ENCODE measurements at regions of chr1 and their contacts with region 1.

Region 1: DNA sequence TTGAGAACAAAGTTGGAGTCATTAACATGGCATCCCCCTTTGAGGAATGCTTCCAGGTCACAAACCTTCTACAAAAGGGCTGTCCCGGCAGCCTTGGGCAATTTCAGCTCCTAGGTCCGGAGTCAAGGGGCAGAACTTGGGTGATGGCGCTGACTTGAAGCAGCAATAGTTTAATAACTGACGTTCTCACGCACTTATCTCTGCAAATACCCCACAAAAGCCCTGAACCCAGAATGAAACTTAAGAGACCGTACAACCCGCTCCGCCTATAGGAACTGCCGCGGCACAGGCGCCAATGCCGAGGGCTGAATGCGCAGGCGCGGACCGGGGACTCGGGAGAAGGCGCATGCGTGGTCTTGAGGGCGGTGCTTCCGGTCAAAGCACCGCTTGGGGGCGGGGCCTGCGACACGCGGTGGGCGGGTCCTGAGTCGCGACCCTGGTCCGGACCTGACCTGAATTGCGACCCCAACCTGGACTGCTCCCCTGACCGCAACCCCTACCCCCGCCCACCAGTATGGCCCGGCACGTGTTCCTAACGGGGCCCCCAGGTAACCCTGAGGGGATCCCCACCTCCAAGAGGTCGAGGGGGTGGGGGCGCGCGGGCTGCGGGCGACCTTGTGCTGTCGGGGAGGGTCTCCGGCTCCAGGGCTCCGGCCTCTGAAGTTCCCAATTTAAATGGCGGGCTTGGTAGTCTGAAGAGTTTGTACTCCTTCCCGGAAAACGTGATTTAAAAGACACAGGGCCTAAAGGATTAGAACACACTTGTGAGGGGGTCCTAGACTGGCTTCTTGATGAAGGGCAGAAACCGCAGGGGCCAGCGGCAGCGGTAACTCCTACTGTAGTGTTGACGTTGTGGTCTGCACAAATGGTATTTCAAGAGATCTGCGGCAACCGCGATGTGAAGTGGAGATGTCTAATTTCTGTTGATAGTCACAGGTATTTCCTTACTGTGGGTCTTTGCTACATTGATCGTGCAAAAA is at the start of gene NTPCR:
- DNase-seq: peak; percentile 84 to 99 (median 93)
- ATAC-seq: peak; percentile 88
- H3K4me3 ChIP-seq: peak within 1 kb of the TSS; percentile 76
- H3K4me3 Mint-ChIP-seq: peak within 1 kb of the TSS; percentile 90 to 98 (median 96)
- H3K27ac ChIP-seq: peak within 1 kb of the TSS; percentile 80
- H3K27ac Mint-ChIP-seq: peak within 1 kb of the TSS; percentile 90 to 97 (median 92)
- H3K4me1 ChIP-seq: peaks cover 8 to 18% of the 10 kb centered on the region in 2 donors
- H3K4me1 Mint-ChIP-seq: peaks cover 23 to 43% (median 42%) of the 10 kb centered on the region in 7 donors
- H3K27me3 ChIP-seq: no peaks in the 10 kb centered on the region
- H3K27me3 Mint-ChIP-seq: no peaks in the 10 kb centered on the region
- total RNA-seq, gene NTPCR: 16.0 to 28.7 (median 17.3) TPM

Region 2: DNA sequence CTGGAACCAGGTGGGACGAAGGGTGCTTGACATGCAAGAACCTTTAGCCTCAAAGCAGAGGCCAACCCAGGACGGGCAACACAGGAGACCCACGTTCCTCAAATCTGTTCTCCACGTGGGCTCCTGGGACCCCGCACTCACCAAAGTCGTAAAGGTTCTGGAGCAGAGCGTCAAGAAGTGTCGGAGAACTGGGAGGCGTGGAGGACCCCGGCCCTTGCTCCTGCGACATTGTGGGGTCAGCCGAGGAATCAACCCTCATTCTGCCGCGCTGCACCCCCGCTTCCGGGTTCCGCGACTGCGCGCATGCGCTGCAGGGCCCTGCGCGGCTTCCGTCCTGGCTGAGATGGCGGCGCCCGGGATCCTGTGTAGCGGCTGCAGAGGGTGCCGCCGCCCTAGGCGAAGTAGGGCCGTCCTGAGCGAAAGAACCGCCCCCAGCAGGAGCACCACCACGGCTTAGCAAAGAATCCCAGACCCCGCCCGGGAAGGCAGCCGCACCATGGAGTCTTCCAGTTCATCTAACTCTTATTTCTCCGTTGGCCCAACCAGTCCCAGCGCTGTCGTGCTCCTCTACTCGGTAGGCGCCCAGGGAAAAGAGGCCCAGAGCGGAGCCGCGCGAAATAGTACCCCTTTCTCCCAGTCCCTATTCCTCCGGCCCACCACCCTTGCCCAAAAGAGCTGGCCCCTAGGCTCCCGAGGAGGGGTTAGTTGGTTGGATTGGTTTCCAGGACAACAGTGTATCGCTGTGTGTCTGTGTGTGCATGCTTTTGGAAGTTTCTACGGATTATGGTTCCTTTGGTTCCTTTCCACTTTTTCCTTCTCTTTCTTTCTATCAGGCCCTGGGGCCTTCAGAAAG is 1709.4 kb before region 1 on chr1 and contains the start of gene GNPAT:
- CTCF ChIA-PET with region 1: no interaction called
- POLR2A ChIA-PET with region 1: no interaction called
- intact Hi-C with region 1: loop called in 1 of 2 experiments (anchors 2 kb)
- DNase-seq: peak; percentile 86 to 97 (median 92)
- ATAC-seq: peak; percentile 98
- H3K4me3 ChIP-seq: peak within 1 kb of the TSS; percentile 98
- H3K4me3 Mint-ChIP-seq: peak within 1 kb of the TSS; percentile 90 to 99 (median 95)
- H3K27ac ChIP-seq: peak within 1 kb of the TSS; percentile 93
- H3K27ac Mint-ChIP-seq: peak within 1 kb of the TSS; percentile 92 to 99 (median 97)
- H3K4me1 ChIP-seq: peaks cover 17 to 44% of the 10 kb centered on the region in 2 donors
- H3K4me1 Mint-ChIP-seq: peaks cover 47 to 86% (median 76%) of the 10 kb centered on the region in 7 donors
- H3K27me3 ChIP-seq: no peaks in the 10 kb centered on the region
- H3K27me3 Mint-ChIP-seq: no peaks in the 10 kb centered on the region
- total RNA-seq, gene GNPAT: 17.3 to 41.0 (median 35.5) TPM

Region 3: DNA sequence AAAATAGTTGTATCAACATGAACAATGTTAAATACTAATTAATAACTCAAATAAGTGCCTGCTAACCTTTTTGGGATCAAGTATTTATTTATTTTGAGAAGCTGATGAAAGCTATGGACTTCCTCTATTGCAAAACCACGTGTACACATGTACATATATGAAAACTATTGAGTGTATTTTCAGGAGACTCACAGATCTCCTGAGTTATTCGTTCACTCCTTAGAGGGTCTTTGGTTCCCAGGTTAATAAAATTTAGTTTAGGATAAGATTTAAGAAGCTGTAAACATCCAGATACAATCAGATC is 1193.4 kb before region 1 on chr1:
- CTCF ChIA-PET with region 1: no interaction called
- POLR2A ChIA-PET with region 1: no interaction called
- intact Hi-C with region 1: loop called in 1 of 2 experiments (anchors 10 kb)
- DNase-seq: no peak
- ATAC-seq: peak; percentile 54
- H3K4me3 ChIP-seq: no peak overlapping the region
- H3K4me3 Mint-ChIP-seq: peak overlapping the region in 1 of 10 donors; percentile 14
- H3K27ac ChIP-seq: no peak overlapping the region
- H3K27ac Mint-ChIP-seq: no peak overlapping the region
- H3K4me1 ChIP-seq: no peaks in the 10 kb centered on the region
- H3K4me1 Mint-ChIP-seq: peaks cover 0 to 13% (median 0%) of the 10 kb centered on the region in 7 donors
- H3K27me3 ChIP-seq: no peaks in the 10 kb centered on the region
- H3K27me3 Mint-ChIP-seq: no peaks in the 10 kb centered on the region

Region 4: GRCh38 chr1:232635778-232636356 is 314.6 kb before region 1 on chr1:
- CTCF ChIA-PET with region 1: no interaction called
- POLR2A ChIA-PET with region 1: no interaction called
- intact Hi-C with region 1: loop called (anchors 1 kb)
- DNase-seq: peak in 6 of 9 donors; percentile 12 to 57 (median 38)
- ATAC-seq: peak; percentile 83
- H3K4me3 ChIP-seq: no peak overlapping the region
- H3K4me3 Mint-ChIP-seq: no peak overlapping the region
- H3K27ac ChIP-seq: no peak overlapping the region
- H3K27ac Mint-ChIP-seq: no peak overlapping the region
- H3K4me1 ChIP-seq: peaks cover 2 to 3% of the 10 kb centered on the region in 2 donors
- H3K4me1 Mint-ChIP-seq: peaks cover under 1 to 5% (median 2%) of the 10 kb centered on the region in 7 donors
- H3K27me3 ChIP-seq: peaks cover 0 to 3% of the 10 kb centered on the region in 2 donors
- H3K27me3 Mint-ChIP-seq: peaks cover 5 to 38% (median 15%) of the 10 kb centered on the region in 5 donors

Region 5: GRCh38 chr1:232805269-232806185 is 145.0 kb before region 1 on chr1 and contains the start of gene MAP10:
- CTCF ChIA-PET with region 1: no interaction called
- POLR2A ChIA-PET with region 1: no interaction called
- intact Hi-C with region 1: loop called (anchors 1 kb)
- DNase-seq: peak; percentile 46 to 79 (median 69)
- ATAC-seq: peak; percentile 83
- H3K4me3 ChIP-seq: peak within 1 kb of the TSS; percentile 65
- H3K4me3 Mint-ChIP-seq: peak within 1 kb of the TSS; percentile 82 to 93 (median 88)
- H3K27ac ChIP-seq: peak within 1 kb of the TSS; percentile 64
- H3K27ac Mint-ChIP-seq: peak within 1 kb of the TSS; percentile 60 to 95 (median 87)
- H3K4me1 ChIP-seq: peaks cover 7 to 12% of the 10 kb centered on the region in 2 donors
- H3K4me1 Mint-ChIP-seq: peaks cover 10 to 35% (median 22%) of the 10 kb centered on the region in 7 donors
- H3K27me3 ChIP-seq: no peaks in the 10 kb centered on the region
- H3K27me3 Mint-ChIP-seq: peaks cover 0 to 12% (median 0%) of the 10 kb centered on the region in 5 donors
- total RNA-seq, gene MAP10: 1.5 to 4.5 (median 3.2) TPM

Region 6: DNA sequence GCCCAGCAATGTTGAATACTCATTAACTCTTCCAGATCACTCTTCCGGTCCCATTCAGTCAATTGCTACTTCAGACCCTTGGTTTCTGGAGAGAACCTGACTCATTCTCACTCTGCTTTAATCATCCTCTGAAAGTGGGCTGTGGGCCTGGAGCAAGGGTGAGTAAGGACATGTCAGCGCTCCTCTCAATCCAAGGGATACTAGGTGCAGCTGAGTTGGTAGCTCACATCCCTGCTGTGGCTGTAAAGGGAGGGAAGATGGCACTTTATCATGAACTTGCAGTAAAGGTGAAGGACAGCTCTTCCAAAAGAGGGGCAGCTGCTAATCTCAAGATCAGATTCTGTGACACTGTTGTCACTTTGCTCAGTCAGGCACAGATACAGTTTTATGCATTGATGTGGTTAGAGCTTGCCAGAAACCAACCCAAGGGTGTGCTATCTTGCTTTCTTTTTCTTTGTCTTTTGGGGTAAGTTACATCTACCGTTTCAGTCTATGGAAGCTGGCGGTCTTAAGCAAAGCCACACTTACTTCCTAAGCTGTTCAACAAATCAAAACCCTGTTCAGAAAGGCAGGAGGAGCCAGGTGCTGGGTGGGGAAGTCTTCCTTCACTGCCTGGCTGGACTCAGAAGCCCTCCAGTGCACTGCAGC is 26.6 kb before region 1 on chr1:
- CTCF ChIA-PET with region 1: no interaction called
- POLR2A ChIA-PET with region 1: interaction called, 3 read pairs
- intact Hi-C with region 1: loop called (anchors 1 kb)
- DNase-seq: peak in 8 of 9 donors; percentile 46 to 90 (median 84)
- ATAC-seq: peak; percentile 96
- H3K4me3 ChIP-seq: no peak overlapping the region
- H3K4me3 Mint-ChIP-seq: peak overlapping the region; percentile 58 to 89 (median 80)
- H3K27ac ChIP-seq: peak overlapping the region; percentile 49
- H3K27ac Mint-ChIP-seq: peak overlapping the region; percentile 87 to 96 (median 93)
- H3K4me1 ChIP-seq: peaks cover 30 to 41% of the 10 kb centered on the region in 2 donors
- H3K4me1 Mint-ChIP-seq: peaks cover 36 to 64% (median 45%) of the 10 kb centered on the region in 7 donors
- H3K27me3 ChIP-seq: no peaks in the 10 kb centered on the region
- H3K27me3 Mint-ChIP-seq: no peaks in the 10 kb centered on the region

Region 7: DNA sequence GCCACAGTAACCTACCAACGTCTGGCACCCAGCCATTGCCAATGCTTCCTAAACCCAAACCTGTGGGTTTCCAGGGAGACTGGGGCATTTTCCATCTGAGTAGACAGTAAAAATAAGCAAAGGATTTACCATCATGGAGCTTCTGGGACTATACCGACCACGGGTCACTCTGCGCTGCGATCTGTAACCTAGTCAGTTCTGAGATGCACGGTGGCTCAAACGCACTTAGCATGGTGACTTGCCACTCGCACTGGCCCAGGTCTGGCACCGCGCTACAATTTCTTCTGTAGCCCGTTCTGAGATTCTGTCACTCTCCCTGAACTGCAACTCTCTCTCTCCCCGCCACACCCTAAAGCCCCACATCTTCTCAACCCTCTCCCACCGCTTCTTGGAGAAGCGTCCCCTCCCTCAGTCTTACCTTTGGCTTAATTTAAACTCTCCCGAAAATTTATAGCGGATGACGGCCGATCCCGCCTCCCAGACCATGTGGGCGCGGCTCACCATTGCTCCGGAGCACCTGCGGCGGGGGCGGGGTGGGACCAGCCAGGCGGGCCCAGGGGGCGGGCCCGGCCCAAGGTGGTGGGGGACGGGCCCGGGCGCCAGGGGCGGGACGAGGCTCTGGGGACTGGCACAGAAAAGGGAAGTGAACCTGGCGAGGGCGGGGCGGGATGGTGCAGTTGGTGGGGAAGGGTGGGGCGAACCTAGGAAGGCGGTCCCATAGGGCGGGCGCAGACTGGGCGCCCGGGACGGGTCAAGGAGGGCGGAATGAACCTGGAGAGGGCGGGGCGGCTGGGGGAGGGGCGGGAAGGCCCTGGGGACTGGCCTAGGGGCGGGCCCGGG is 376.5 kb after region 1 on chr1:
- CTCF ChIA-PET with region 1: no interaction called
- POLR2A ChIA-PET with region 1: interaction called, 3 read pairs
- intact Hi-C with region 1: loop called in 1 of 2 experiments (anchors 1 kb)
- DNase-seq: peak; percentile 61 to 79 (median 74)
- ATAC-seq: peak; percentile 93
- H3K4me3 ChIP-seq: peak overlapping the region; percentile 43
- H3K4me3 Mint-ChIP-seq: peak overlapping the region; percentile 67 to 89 (median 83)
- H3K27ac ChIP-seq: no peak overlapping the region
- H3K27ac Mint-ChIP-seq: peak overlapping the region in 4 of 9 donors; percentile 8 to 83 (median 38)
- H3K4me1 ChIP-seq: peaks cover 6 to 8% of the 10 kb centered on the region in 2 donors
- H3K4me1 Mint-ChIP-seq: peaks cover 4 to 19% (median 8%) of the 10 kb centered on the region in 7 donors
- H3K27me3 ChIP-seq: no peaks in the 10 kb centered on the region
- H3K27me3 Mint-ChIP-seq: peaks cover 4 to 52% (median 13%) of the 10 kb centered on the region in 5 donors